SK-N-SH (cell line): ENCODE measurements at regions of chr3 and their contacts with region 1.

Region 1: DNA sequence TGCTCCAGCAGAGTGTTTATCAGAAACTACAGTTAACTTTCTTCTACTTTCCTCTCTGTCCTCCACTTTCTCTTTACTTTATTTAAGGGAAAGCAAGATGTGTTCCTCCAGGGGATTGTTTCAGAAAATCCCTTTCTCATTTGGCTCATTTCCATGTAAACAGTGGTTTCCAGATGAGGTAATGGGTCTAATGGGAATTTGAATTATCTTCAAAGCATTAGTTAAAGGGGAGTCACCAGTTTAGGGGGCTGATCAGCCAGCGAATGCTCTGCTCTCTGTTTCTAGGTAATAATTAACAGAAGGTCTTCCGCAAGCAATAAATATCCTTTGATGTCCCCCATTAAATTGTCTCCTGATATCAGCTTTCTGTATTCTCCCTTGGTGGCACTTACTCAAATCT is 30.4 kb upstream of the ZNF639 start:
- DNase-seq: no peak
- H3K4me3 ChIP-seq: no peak overlapping the region
- H3K27ac ChIP-seq: no peak overlapping the region
- H3K4me1 ChIP-seq: no peaks in the 10 kb centered on the region
- H3K27me3 ChIP-seq: no peaks in the 10 kb centered on the region
- CTCF ChIP-seq: no peak
- EP300 ChIP-seq: no peak
- RAD21 ChIP-seq: no peak

Region 2: DNA sequence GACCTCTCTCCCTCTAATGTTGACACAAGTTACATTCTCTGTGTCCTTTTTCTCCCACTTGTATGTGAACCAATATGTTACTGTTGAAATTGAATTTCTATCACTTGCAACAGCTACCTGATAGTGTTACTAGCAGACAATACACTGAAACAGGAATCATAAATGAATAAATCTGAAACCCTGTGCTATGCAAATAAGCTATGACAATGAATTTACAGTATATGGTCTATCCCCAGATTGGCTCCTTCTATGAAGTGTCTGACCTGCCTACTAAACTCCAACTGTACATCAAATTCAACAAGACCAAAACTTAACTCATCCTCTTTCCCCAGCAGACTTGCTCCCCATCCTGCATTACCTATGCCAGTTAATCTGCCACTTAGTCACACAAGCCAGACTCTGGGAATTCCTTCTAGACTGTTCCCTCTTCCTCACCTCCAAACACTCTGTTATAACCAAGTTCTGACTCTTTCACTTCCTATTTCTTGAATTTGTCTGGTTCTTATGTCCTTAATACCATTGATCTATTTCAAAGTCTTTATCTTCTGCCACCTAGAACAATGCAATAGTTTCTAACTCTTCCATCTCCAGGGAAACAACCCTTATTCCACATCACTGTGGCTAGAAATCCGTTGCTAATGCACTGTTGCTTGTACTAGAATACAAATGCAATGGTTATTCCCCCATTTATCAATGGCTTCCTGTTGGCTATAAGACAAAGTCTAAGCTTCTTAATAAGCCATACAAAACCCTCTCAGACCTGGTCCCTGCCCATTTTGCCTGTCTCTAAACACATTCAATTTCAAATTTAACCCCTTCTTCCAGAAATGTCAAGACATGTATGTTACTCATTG is 17.0 kb after region 1 on chr3:
- CTCF ChIA-PET with region 1: interaction called, 10 read pairs
- POLR2A ChIA-PET with region 1: no interaction called
- DNase-seq: no peak
- H3K4me3 ChIP-seq: no peak overlapping the region
- H3K27ac ChIP-seq: no peak overlapping the region
- H3K4me1 ChIP-seq: peaks cover 0 to 6% of the 10 kb centered on the region in 2 experiments; a peak in 1 of 4 replicates
- H3K27me3 ChIP-seq: no peaks in the 10 kb centered on the region
- CTCF ChIP-seq: no peak
- EP300 ChIP-seq: no peak
- RAD21 ChIP-seq: no peak

Region 3: DNA sequence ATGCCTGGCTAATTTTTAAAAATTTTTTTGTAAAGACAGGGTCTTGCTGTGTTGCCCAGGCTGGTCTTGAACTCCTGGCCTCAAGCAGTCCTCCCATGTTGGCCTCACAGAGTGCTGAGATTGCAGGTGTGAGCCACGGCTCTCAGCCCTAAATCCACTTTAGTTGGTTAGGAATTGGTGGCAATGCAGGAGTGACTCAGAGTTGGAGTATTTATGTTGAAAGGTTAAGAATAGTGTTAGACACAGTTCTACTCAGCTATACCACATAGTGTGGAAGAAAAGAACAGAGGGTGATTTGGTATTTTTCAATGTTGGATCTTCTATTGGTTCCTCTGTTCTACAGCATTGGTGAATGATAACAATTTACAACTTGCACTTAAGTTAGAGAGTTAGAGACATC is 38.0 kb after region 1 on chr3:
- CTCF ChIA-PET with region 1: no interaction called
- POLR2A ChIA-PET with region 1: no interaction called
- DNase-seq: no peak
- H3K4me3 ChIP-seq: no peak overlapping the region
- H3K27ac ChIP-seq: no peak overlapping the region
- H3K4me1 ChIP-seq: no peaks in the 10 kb centered on the region
- H3K27me3 ChIP-seq: no peaks in the 10 kb centered on the region
- CTCF ChIP-seq: no peak
- EP300 ChIP-seq: no peak
- RAD21 ChIP-seq: no peak